Dendritic cell treated with granulocyte-macrophage colony-stimulating factor and Interleukin-4, amounts not matched to agents 40 ng/mL and 50 ng/mL, for 4 days (primary cell): ENCODE measurements at regions of chr15 and their contacts with region 1.

Region 1: GRCh38 chr15:68559345-68560310 is 19.2 kb upstream of the CORO2B start:
- H3K4me3 Mint-ChIP-seq: peak overlapping the region; percentile 76
- H3K27ac Mint-ChIP-seq: peak overlapping the region; percentile 13
- H3K4me1 Mint-ChIP-seq: peaks cover 17% of the 10 kb centered on the region
- H3K27me3 Mint-ChIP-seq: peaks cover 57% of the 10 kb centered on the region

Region 2: DNA sequence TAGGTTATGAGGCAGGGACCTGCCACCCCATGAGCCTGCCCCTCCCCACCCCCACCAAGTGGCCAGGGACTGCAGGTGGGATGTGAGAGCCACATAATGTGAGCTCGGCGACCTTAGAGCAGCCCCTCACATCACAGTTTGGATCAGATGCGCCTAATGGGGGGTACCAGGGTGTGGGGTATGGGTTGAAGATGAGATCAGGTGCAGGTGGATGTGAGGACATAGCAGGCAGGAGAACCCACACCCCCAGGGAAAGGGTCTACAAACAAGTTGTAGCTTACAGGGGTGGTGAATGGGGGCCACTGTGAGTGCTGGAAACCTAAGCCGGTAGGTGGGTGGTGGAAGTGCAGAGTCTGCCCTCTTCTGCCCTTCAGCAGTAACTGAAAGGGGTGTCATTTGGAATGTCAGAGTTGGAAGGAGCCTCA is 113.2 kb after region 1 on chr15:
- intact Hi-C with region 1: loop called (anchors 1 kb)
- H3K4me3 Mint-ChIP-seq: no peak overlapping the region
- H3K27ac Mint-ChIP-seq: no peak overlapping the region
- H3K4me1 Mint-ChIP-seq: peaks cover 22% of the 10 kb centered on the region
- H3K27me3 Mint-ChIP-seq: peaks cover 9% of the 10 kb centered on the region

Region 3: DNA sequence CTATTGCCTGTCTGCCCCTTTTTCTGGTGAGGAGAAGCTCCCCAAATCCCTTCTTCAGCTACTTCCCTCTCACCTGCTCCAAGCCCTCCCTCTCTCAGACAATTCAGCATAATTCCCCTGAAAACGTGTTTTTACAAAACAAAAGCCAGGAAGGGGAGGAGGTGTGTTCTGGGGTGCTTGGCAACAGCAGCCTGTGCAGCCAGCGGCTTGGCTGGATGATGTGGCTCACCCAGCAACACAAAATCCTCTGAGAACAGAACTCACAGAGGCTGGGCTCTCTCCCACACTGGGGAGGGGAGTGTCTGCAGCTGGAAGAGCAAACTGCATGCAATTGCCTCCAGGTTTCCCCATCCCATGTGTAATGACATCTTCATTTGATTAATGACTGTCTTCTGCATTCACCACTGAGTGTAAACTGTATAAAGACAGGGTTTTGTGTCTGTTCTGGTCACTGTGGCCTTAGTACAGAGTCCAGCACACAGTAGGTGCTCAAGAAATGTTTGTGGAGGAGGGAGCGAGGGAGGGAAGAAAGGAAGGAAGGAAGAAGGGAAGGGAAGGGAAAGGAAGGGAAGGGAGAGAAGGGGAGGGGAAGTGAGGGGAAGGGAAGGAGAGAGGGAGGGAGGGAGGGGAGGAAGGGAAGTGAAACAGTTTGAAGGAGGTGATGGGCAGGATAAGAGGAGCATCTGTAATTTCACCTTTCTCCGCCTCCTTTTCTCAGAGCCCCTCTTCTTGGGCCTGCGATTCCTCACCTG is 530.7 kb after region 1 on chr15:
- intact Hi-C with region 1: no loop called
- H3K4me3 Mint-ChIP-seq: no peak overlapping the region
- H3K27ac Mint-ChIP-seq: no peak overlapping the region
- H3K4me1 Mint-ChIP-seq: peaks cover 34% of the 10 kb centered on the region
- H3K27me3 Mint-ChIP-seq: peaks cover 4% of the 10 kb centered on the region